ENCODE measurements at regions of chr13 and their contacts with region 1.

Region 1: GRCh38 chr13:48595431-48596429 is 58.0 kb upstream of the CYSLTR2 start:
- DNase-seq: peak in 1 of 2 donors; percentile 44
- H3K4me3 ChIP-seq: no peak overlapping the region
- CTCF ChIP-seq: no peak
- POLR2A ChIP-seq: no peak

Region 2: GRCh38 chr13:48066310-48066989 is 529.3 kb before region 1 on chr13:
- intact Hi-C with region 1: no loop called
- DNase-seq: no peak
- H3K4me3 ChIP-seq: no peak overlapping the region
- CTCF ChIP-seq: no peak
- POLR2A ChIP-seq: no peak

Region 3: GRCh38 chr13:48626077-48626449 is 30.3 kb after region 1 on chr13:
- intact Hi-C with region 1: no loop called
- DNase-seq: no peak
- H3K4me3 ChIP-seq: no peak overlapping the region
- CTCF ChIP-seq: no peak
- POLR2A ChIP-seq: no peak

Region 4: GRCh38 chr13:48731957-48732569 is 136.3 kb after region 1 on chr13:
- intact Hi-C with region 1: loop called (anchors 10 kb)
- DNase-seq: no peak
- H3K4me3 ChIP-seq: no peak overlapping the region
- CTCF ChIP-seq: no peak
- POLR2A ChIP-seq: no peak

Region 5: GRCh38 chr13:48769107-48769704 is 173.5 kb after region 1 on chr13:
- intact Hi-C with region 1: loop called (anchors 10 kb)
- DNase-seq: peak; percentile 92 to 94
- H3K4me3 ChIP-seq: no peak overlapping the region
- CTCF ChIP-seq: peak in 2 of 3 donors; percentile 98 to 100
- POLR2A ChIP-seq: no peak

Measured in lower leg skin (tissue), 4 donors.